ENCODE measurements at regions of chr3 and their contacts with region 1.

Region 1: GRCh38 chr3:178181784-178182183 is 354.5 kb upstream of the KCNMB2 start:
- DNase-seq: no peak

Region 2: DNA sequence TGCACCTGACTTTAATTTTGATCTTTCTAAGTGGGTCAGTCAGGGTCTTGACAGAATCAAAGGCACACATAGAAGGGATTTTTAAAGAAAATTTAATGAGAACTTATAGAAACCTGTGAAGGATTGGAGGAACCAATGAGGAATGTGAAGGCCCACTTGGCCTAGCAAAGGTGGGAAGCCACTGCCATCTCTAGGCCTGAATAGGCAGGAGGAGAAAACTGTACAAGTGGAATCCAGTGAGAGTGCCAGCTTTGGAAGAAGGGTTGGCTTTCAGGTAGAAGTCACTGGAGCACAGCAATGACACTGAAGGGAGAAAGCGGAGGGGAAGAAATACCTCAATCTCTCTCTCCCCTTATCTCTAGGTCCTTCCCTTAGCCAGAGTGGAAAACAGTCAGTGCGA is 26.3 kb before region 1 on chr3:
- intact Hi-C with region 1: loop called in 1 of 2 experiments (anchors 2 kb)
- DNase-seq: no peak